Right ventricle myocardium inferior (tissue), 1 donor: ENCODE measurements at regions of chr10 and their contacts with region 1.

Region 1: GRCh38 chr10:106175760-106176377 is 988.6 kb downstream of the SORCS1 start:
- DNase-seq: no peak
- ATAC-seq: no peak

Region 2: DNA sequence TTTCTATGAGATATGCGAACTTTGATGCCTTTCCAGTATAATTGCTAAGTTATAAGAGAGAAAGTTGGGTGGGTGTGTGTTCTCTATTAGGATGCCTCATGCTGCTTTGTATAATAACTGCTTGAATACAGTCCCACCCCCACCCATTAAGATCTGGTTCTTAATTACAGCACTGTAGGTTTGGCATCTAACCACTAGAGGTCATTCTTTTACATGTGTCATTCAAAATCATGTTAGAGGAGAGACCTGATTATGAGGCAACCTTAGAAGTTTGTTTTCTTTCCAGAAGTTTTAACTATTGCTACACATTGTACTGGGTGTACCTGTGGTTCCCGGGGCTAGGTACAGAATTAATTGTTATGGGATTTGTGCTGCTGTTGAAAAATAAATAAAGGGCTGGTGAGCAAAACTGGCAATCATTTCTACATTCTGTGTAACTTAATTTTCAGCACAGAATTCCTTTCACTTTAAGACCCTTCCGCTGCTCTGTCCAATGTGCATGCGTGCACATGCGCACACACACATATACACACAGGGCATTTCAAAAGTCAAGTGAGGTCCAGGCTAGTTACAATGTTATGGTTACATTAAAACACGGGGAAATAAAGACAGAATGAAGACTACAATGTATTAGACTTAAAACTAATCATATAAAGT is 378.5 kb before region 1 on chr10:
- intact Hi-C with region 1: loop called (anchors 10 kb)
- DNase-seq: no peak
- ATAC-seq: peak; percentile 46

Region 3: GRCh38 chr10:105950410-105950809 is 225.5 kb before region 1 on chr10:
- intact Hi-C with region 1: loop called (anchors 5 kb)
- DNase-seq: peak; percentile 62
- ATAC-seq: peak; percentile 57

Region 4: DNA sequence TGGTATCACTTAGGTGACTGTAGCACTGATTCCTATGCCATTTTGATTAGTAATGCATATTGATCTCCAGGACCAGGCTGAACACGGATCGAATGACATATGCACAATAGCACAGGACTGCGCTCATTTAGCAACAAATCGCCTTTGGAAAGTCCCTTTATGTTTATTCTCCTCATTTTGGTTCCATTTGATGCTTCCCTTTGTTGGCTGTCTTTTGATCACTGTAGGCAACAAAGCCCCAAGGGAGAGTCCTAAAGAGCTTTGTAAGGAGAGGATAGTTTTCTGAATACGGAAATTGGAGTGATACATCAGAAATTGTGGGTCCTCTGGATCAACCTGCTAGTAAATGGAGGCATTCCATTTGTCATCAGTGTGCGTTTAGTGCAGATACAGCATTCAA is 122.8 kb before region 1 on chr10:
- intact Hi-C with region 1: no loop called
- DNase-seq: no peak
- ATAC-seq: no peak